ENCODE measurements at regions of chr17 and their contacts with region 1.

Region 1: DNA sequence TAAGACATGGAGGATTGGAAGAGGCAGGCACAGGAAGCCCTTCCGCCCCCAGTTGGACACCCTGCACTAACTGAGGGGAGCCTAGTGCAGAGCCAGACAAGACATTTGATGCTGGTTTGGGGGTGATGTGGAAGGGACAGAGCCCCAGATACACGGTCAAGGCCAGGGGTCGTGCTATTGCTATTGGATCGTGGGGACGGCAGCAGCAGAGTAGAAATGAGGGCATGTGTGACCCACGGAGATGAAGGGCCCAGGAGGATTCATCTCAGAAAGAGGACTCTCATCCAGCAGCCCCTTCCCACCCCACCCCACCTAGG is 2.0 kb upstream of the VAMP2 start:
- DNase-seq: peak in 1 of 2 donors; percentile 12
- ATAC-seq: no peak
- H3K4me3 ChIP-seq: peak overlapping the region; percentile 99
- H3K27ac ChIP-seq: peak overlapping the region; percentile 100
- H3K4me1 ChIP-seq: peaks cover 30% of the 10 kb centered on the region
- H3K27me3 ChIP-seq: no peaks in the 10 kb centered on the region
- CTCF ChIP-seq: no peak

Region 2: DNA sequence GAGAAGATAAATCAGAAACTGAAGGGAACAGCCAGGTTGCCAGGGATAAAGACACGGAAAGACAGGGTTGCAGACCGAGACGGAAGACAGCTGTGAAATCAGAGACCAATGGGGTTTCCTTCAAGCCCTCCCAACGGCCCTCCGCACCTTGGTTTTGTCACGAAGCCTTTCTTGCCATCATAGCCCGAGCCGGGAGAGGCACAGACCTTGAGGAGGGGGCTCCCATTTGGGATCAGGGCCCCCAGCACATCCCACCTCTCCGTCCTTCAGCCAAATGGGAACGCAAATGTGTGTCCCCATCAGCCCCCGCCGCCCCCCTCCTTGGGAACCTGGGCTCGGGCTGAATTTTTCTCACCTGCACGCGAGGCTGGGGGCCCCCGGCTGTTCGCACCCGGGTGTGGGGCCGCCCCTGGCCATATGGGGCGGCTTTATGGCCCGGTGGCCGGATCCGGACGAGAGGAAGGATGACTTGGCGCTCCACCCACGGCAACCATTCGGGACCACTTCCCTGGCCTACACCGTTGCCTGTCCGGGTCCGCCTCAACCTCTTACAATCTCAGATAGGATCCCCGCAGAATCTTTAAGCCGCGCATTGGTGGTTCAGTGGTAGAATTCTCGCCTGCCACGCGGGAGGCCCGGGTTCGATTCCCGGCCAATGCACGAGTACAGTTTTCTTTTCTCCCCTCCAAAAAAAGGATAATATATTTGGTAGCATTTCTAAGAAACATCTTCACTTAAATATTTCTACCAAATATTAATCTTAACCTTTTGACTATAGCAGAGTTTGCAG is 39.4 kb before region 1 on chr17:
- intact Hi-C with region 1: loop called in 1 of 2 experiments (anchors 5 kb)
- DNase-seq: peak; percentile 78 to 83
- ATAC-seq: peak; percentile 43 to 72 (median 50)
- H3K4me3 ChIP-seq: peak overlapping the region; percentile 77
- H3K27ac ChIP-seq: no peak overlapping the region
- H3K4me1 ChIP-seq: peaks cover 30% of the 10 kb centered on the region
- H3K27me3 ChIP-seq: peaks cover 0 to 31% (median 7%) of the 10 kb centered on the region in 3 donors
- CTCF ChIP-seq: no peak